Right ventricle myocardium inferior (tissue), 1 donor: ENCODE measurements at regions of chr17 and their contacts with region 1.

Region 1: GRCh38 chr17:10226930-10227685 is 28.7 kb upstream of the GAS7 start:
- DNase-seq: peak; percentile 87
- ATAC-seq: peak; percentile 74

Region 2: GRCh38 chr17:9924735-9925191 is 302.3 kb before region 1 on chr17:
- intact Hi-C with region 1: loop called (anchors 5 kb)
- DNase-seq: no peak
- ATAC-seq: peak; percentile 35

Region 3: DNA sequence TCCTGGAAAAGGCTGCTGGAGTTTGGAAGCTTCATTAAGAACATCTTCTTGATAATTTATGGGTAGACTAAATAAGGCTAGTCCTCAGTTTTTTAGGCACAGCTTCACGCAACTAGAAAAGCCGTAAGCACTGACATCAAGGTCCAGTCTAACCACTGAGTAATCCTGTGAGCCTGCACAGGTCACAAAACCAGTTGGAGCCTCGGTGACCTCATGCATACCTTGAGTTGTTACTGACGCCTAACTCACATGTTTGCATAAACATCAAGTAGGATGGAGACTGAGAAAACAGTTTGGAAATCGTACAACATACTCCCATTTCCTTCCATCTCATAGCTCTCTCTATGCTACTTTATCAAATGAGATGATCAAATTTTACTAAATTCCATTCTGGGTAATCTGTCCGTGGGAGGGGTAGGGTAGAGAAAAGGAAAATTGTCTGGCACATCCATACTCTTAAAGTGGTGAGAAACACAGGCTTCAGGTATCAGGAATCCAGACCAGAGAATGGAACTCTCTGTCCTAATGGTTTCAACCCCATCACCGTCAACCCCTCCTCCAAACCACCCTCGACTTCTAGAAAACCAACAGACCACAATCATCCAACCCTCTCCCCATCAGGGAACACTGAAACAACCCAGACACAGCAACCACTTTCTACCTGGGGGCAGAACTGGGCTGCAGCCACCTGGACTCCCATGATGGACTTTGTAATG is 258.0 kb before region 1 on chr17:
- intact Hi-C with region 1: loop called (anchors 1 kb)
- DNase-seq: no peak
- ATAC-seq: no peak

Region 4: GRCh38 chr17:10417431-10417830 is 190.3 kb after region 1 on chr17:
- intact Hi-C with region 1: no loop called
- DNase-seq: no peak
- ATAC-seq: no peak